ENCODE measurements at regions of chr2 and their contacts with region 1.

Region 1: GRCh38 chr2:48107326-48107925 is 201.1 kb upstream of the FBXO11 start:
- DNase-seq: no peak
- H3K4me3 ChIP-seq: no peak overlapping the region
- H3K27ac ChIP-seq: peak overlapping the region; percentile 43 to 77
- H3K4me1 ChIP-seq: peaks cover 3 to 5% of the 10 kb centered on the region in 2 donors
- H3K27me3 ChIP-seq: no peaks in the 10 kb centered on the region
- CTCF ChIP-seq: no peak
- POLR2A ChIP-seq: no peak

Region 2: DNA sequence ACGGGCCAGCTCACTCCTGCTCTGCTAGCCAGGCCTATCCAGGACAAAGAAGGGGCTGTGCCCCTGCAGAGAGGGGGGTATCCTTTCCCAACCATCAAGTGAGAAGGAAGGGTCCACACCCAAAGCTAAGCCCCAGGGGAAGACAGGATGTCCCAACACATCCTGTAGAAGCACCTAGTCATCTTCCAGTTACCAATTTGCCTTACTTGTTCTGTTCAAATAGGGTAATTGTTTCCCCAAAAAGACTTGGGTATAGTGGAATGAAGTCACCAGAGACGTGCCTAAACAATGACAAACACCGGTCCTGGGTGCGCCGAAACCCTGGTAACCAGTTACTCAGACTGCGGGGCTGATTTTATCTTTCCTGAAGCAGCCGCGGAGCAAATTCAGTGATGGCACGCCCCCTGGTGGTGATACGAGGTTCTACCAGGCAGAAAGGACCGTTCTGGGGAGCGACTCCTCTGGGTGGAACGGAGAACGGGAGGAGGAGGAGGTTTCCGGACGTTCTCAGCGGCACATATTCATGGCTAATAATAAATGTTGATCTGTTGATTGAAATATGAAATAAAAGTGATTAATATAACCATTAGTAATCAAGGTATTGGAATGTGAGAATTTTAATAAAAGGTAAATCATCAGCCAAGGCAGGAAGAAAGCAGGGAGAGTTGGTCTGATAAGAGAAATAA is 313.2 kb after region 1 on chr2:
- intact Hi-C with region 1: loop called (anchors 5 kb)
- DNase-seq: peak; percentile 89
- H3K4me3 ChIP-seq: no peak overlapping the region
- H3K27ac ChIP-seq: no peak overlapping the region
- H3K4me1 ChIP-seq: peaks cover 4 to 13% of the 10 kb centered on the region in 2 donors
- H3K27me3 ChIP-seq: no peaks in the 10 kb centered on the region
- CTCF ChIP-seq: peak; percentile 95 to 97 (median 96)
- POLR2A ChIP-seq: no peak